Vagina (tissue), 2 donors: ENCODE measurements at regions of chr4 and their contacts with region 1.

Region 1: GRCh38 chr4:62324215-62324614 is 1124.1 kb downstream of the ADGRL3 start:
- DNase-seq: no peak
- H3K4me3 ChIP-seq: no peak overlapping the region
- H3K27ac ChIP-seq: no peak overlapping the region
- H3K4me1 ChIP-seq: no peaks in the 10 kb centered on the region
- H3K27me3 ChIP-seq: no peaks in the 10 kb centered on the region
- CTCF ChIP-seq: no peak
- POLR2A ChIP-seq: no peak

Region 2: DNA sequence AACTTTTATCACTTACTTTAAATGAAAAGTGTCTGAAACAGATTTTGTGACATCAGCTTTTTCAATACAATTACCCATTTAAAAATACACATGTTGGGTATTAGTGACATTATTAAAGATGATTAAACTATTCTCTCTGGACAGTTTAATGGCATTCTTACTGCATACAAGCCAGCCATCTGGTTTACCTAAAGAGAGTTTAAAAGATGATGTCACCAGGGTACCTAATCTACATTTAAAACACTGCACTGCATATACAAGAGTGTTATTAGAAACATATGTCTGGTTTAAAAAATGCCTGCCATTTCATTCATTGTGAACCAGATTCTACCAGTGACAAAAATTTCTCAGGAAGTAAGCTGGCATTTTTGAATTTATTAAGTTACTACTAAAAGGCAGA is 205.0 kb before region 1 on chr4:
- intact Hi-C with region 1: no loop called
- DNase-seq: no peak
- H3K4me3 ChIP-seq: no peak overlapping the region
- H3K27ac ChIP-seq: no peak overlapping the region
- H3K4me1 ChIP-seq: no peaks in the 10 kb centered on the region
- H3K27me3 ChIP-seq: no peaks in the 10 kb centered on the region
- CTCF ChIP-seq: no peak
- POLR2A ChIP-seq: no peak

Region 3: GRCh38 chr4:62342346-62342745 is 18.1 kb after region 1 on chr4:
- intact Hi-C with region 1: loop called (anchors 2 kb)
- DNase-seq: no peak
- H3K4me3 ChIP-seq: no peak overlapping the region
- H3K27ac ChIP-seq: no peak overlapping the region
- H3K4me1 ChIP-seq: no peaks in the 10 kb centered on the region
- H3K27me3 ChIP-seq: no peaks in the 10 kb centered on the region
- CTCF ChIP-seq: no peak
- POLR2A ChIP-seq: no peak